Activated B cell treated with CpG ODN at 0.5 μM for 24 hours (primary cell): ENCODE measurements at regions of chr5 and their contacts with region 1.

Region 1: DNA sequence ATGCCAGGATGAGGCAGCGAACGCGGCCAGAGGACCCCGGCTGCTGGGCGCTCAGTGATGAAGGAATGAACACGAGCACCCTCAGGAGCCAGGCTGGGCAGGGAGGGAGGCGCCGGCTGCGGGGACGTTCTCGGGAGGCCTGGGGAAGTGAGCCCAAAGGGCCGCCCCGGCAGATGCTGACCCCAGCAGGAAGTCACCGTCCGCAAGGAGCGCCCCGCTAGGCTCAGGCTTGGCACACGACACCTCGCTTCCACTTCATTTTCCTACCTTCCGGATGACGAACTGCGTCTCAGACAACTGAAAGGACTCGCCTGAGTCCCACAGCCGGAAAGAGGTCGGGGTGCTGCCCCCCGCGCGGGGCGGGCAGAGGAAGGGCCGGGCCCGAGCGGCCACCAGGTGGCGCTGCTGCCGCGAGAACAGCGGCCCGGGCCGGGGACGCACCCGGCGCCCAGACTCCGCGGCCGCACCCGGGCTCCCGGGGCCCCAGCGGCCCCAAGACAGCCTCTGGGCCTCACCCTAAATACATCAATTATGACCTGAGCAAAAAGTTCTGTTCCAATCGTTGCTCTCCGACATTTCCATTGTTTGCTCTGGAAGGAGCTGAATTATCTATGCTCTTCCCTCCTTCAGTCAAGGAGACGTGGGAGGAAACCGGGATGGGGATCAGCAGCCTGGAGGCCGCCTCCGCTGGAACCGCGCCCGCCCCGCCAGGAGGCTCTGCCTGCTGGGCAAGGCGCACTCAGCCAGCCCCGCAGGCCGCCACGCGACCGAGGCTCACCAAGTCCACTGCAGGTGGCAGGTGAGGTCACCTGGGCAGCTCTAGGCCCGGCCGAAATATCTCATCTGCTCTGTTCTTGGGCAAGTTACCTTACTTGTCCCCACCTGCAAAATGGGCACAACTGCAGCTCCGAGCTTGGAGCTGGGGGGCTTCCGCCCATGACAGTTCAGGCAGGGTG is 107.0 kb downstream of the ZNF354C start:
- DNase-seq: peak; percentile 71
- ATAC-seq: peak; percentile 91
- H3K4me3 Mint-ChIP-seq: peak overlapping the region; percentile 70
- H3K27ac Mint-ChIP-seq: no peak overlapping the region
- H3K4me1 Mint-ChIP-seq: peaks cover 3% of the 10 kb centered on the region
- H3K27me3 Mint-ChIP-seq: peaks cover 2% of the 10 kb centered on the region
- CTCF ChIP-seq: peak; percentile 37

Region 2: DNA sequence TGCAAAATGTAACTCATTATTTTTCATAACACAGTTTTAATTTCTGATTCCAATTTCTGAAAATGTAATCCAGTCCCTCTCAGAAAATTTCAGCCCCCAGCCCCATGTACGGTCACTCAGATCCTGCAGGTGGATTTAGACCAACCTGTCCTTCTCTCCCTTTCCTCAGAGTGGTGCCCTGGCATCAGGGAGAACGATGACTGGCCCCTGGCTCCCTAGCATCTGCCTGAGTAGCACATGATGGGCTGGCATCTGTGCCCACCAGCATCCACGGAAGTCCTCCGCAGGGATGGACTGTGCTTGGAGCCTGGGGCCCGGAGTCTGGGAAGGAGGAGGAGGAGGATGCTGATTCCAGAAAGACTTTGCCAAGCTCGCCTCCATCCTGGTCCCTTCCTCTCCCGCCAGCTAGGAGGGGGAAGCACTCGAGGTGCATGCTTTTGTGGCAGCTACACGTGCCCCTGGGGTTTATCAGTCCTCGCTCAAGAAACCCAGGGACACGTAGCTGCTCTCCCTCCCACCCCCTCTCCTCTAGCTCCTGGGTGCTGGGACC is 328.8 kb after region 1 on chr5:
- CTCF ChIA-PET with region 1: interaction called, 13 read pairs
- POLR2A ChIA-PET with region 1: no interaction called
- intact Hi-C with region 1: loop called (anchors 1 kb)
- DNase-seq: no peak
- ATAC-seq: no peak
- H3K4me3 Mint-ChIP-seq: no peak overlapping the region
- H3K27ac Mint-ChIP-seq: no peak overlapping the region
- H3K4me1 Mint-ChIP-seq: peaks cover 2% of the 10 kb centered on the region
- H3K27me3 Mint-ChIP-seq: peaks cover 2% of the 10 kb centered on the region
- CTCF ChIP-seq: no peak

Region 3: DNA sequence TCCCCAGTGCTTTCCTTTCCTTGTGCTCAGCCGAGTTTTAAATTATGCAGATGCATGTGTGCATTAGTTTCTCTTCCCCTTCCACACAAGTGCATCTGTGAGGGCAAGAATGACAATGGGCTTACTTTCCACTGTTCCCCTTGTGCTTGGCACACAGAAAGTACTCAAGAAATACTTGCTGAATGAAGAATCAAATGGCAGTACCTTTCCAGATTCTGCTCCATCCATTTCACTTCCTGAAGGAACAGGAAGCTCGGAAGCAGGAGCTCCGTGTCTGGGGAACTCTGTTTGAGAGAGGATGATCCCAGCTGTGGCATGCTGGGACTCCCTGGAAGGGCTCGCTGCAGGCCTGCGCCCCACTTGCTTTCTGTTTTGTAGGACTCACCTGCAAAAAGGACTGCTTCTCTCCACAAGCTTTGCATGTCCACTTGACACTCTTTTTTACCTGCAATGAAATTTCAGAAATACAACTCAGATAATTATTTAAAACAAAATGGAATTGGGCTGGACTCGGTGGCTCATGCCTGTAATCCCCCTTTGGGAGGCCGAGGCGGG is 685.9 kb after region 1 on chr5:
- CTCF ChIA-PET with region 1: no interaction called
- POLR2A ChIA-PET with region 1: no interaction called
- intact Hi-C with region 1: no loop called
- DNase-seq: no peak
- ATAC-seq: peak; percentile 93
- H3K4me3 Mint-ChIP-seq: peak overlapping the region; percentile 17
- H3K27ac Mint-ChIP-seq: peak overlapping the region; percentile 80
- H3K4me1 Mint-ChIP-seq: peaks cover 44% of the 10 kb centered on the region
- H3K27me3 Mint-ChIP-seq: no peaks in the 10 kb centered on the region
- CTCF ChIP-seq: no peak

Region 4: DNA sequence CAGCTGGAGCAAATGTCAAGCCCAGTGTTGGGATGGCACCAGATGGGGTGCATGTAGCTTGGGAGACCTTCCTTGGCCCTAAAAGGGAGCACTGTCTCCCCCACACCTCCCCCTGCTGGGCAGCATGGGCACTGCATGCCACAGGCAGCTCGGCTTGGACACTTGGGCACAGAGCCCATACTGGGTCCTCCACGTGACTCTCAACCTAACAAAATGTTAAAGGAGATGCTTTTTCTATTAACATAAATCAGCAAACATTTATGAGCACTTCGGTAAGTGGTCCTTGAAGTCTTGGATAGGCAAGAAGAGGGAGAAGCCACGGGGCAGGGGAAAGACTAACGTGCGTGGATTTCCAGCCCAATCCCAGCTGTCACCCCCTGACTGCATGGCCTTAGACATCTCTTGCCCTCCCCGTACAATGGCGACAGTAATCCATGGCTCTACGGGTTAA is 1148.6 kb after region 1 on chr5:
- CTCF ChIA-PET with region 1: no interaction called
- POLR2A ChIA-PET with region 1: no interaction called
- intact Hi-C with region 1: loop called (anchors 5 kb)
- DNase-seq: peak; percentile 67
- ATAC-seq: peak; percentile 86
- H3K4me3 Mint-ChIP-seq: no peak overlapping the region
- H3K27ac Mint-ChIP-seq: no peak overlapping the region
- H3K4me1 Mint-ChIP-seq: no peaks in the 10 kb centered on the region
- H3K27me3 Mint-ChIP-seq: peaks cover 4% of the 10 kb centered on the region
- CTCF ChIP-seq: peak; percentile 45